ENCODE measurements at regions of chr17 and their contacts with region 1.

Region 1: GRCh38 chr17:59619293-59620063 is at the start of gene CLTC:
- DNase-seq: peak; percentile 89 to 96 (median 95)
- ATAC-seq: peak; percentile 91
- H3K4me3 ChIP-seq: peak within 1 kb of the TSS; percentile 80
- H3K4me3 Mint-ChIP-seq: peak within 1 kb of the TSS; percentile 92 to 100 (median 96)
- H3K27ac ChIP-seq: peak within 1 kb of the TSS; percentile 94
- H3K27ac Mint-ChIP-seq: peak within 1 kb of the TSS; percentile 94 to 100 (median 99)
- H3K4me1 ChIP-seq: peaks cover 12 to 32% of the 10 kb centered on the region in 2 donors
- H3K4me1 Mint-ChIP-seq: peaks cover 23 to 60% (median 51%) of the 10 kb centered on the region in 7 donors
- H3K27me3 ChIP-seq: no peaks in the 10 kb centered on the region
- H3K27me3 Mint-ChIP-seq: peaks cover 0 to 3% (median 0%) of the 10 kb centered on the region in 5 donors
- total RNA-seq, gene CLTC: 67.1 to 174 (median 88.4) TPM

Region 2: GRCh38 chr17:58337600-58338453 is 1281.7 kb before region 1 on chr17:
- CTCF ChIA-PET with region 1: no interaction called
- POLR2A ChIA-PET with region 1: no interaction called
- intact Hi-C with region 1: loop called (anchors 10 kb)
- DNase-seq: peak; percentile 73 to 93 (median 85)
- ATAC-seq: peak; percentile 88
- H3K4me3 ChIP-seq: peak overlapping the region; percentile 98
- H3K4me3 Mint-ChIP-seq: peak overlapping the region; percentile 86 to 100 (median 97)
- H3K27ac ChIP-seq: peak overlapping the region; percentile 98
- H3K27ac Mint-ChIP-seq: peak overlapping the region; percentile 89 to 100 (median 95)
- H3K4me1 ChIP-seq: peaks cover 59 to 77% of the 10 kb centered on the region in 2 donors
- H3K4me1 Mint-ChIP-seq: peaks cover 52 to 90% (median 65%) of the 10 kb centered on the region in 7 donors
- H3K27me3 ChIP-seq: no peaks in the 10 kb centered on the region
- H3K27me3 Mint-ChIP-seq: no peaks in the 10 kb centered on the region

Region 3: GRCh38 chr17:59277031-59277430 is 342.4 kb before region 1 on chr17:
- CTCF ChIA-PET with region 1: no interaction called
- POLR2A ChIA-PET with region 1: no interaction called
- intact Hi-C with region 1: no loop called
- DNase-seq: no peak
- ATAC-seq: peak; percentile 41
- H3K4me3 ChIP-seq: no peak overlapping the region
- H3K4me3 Mint-ChIP-seq: no peak overlapping the region
- H3K27ac ChIP-seq: no peak overlapping the region
- H3K27ac Mint-ChIP-seq: no peak overlapping the region
- H3K4me1 ChIP-seq: no peaks in the 10 kb centered on the region
- H3K4me1 Mint-ChIP-seq: peaks cover 0 to 3% (median 0%) of the 10 kb centered on the region in 7 donors
- H3K27me3 ChIP-seq: no peaks in the 10 kb centered on the region
- H3K27me3 Mint-ChIP-seq: peaks cover 0 to 3% (median 0%) of the 10 kb centered on the region in 5 donors

Region 4: DNA sequence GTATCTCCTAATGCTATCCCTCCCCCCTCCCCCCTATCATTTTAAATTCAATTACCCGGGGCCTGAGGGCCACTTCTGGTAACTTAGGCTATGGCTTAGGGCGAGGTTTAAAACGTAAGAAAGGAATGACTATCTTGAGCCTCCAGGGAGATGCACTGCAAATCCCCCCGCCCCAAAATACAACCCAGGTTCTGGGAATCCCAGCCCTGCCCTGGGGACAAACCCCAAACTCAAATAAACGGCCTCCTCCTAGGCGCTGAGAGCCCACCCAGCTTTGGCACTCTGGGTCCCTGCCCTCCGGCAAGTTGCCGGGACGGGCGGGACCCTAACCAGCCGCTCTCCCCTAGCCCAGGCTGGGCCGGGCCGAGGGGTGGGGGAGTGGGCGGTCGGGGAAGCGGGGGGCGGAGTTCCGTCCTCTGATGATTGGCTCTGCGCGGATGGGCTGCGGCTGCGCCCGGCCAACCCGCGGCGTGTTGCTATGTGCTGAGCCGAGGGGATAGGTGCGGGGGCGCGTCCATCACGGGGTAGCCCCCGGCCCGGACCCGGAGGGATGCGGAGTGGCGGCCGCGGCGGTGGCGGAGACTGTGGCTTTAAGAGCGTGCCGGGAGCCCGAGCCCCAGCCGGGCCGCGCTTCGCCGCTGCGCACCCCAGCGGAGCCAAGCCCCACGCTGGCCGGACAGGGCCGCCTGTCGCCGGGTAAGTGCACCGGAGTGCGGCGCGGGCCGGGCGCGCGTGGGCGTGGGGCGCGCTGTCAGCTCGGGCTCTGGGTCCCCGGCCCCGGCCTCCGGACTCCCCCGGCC is 288.1 kb before region 1 on chr17 and contains the start of gene YPEL2:
- CTCF ChIA-PET with region 1: no interaction called
- POLR2A ChIA-PET with region 1: no interaction called
- intact Hi-C with region 1: loop called (anchors 1 to 5 kb)
- DNase-seq: peak; percentile 77 to 92 (median 89)
- ATAC-seq: peak; percentile 96
- H3K4me3 ChIP-seq: peak within 1 kb of the TSS; percentile 67
- H3K4me3 Mint-ChIP-seq: peak within 1 kb of the TSS; percentile 89 to 96 (median 94)
- H3K27ac ChIP-seq: peak within 1 kb of the TSS; percentile 77
- H3K27ac Mint-ChIP-seq: peak within 1 kb of the TSS; percentile 77 to 98 (median 94)
- H3K4me1 ChIP-seq: peaks cover 30 to 55% of the 10 kb centered on the region in 2 donors
- H3K4me1 Mint-ChIP-seq: peaks cover 53 to 85% (median 79%) of the 10 kb centered on the region in 7 donors
- H3K27me3 ChIP-seq: no peaks in the 10 kb centered on the region
- H3K27me3 Mint-ChIP-seq: peaks cover 0 to 11% (median 0%) of the 10 kb centered on the region in 5 donors
- total RNA-seq, gene YPEL2: 10.6 to 52.0 (median 46.8) TPM

Region 5: DNA sequence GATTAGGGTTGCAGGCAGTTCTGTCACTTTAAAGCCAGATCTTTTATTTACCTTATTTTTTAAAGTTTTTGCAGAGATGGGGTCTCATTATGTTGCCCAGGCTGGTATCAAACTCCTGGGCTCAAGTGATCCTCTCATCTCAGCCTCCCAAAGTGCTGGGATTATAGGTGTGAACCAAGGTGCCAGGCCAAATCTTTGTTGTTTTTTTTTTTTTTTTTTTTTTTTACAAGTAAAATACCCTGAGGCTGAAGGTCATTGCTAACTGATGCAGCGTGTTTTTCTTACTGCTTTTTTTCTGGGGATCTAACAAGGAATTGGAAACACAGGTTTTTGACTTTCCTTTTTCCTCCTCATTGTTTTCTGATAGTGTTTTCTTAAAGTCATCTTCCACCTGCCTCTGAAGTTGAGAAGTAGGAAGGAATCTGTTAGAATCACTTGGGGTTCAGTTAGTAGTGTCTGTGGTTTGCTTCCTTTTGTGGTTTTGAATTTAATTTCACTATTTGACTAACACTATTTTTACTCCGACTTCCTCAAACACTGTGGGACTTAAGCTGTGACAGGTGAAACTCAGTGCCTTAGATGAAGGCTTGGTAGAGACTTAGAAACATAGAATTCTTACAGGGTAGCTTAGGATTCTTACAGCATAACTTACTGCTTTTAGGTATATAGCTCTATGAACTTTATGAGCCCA is 22.5 kb after region 1 on chr17:
- CTCF ChIA-PET with region 1: no interaction called
- POLR2A ChIA-PET with region 1: interaction called, 19 read pairs
- intact Hi-C with region 1: loop called (anchors 1 kb)
- DNase-seq: peak in 6 of 9 donors; percentile 24 to 51 (median 44)
- ATAC-seq: peak; percentile 86
- H3K4me3 ChIP-seq: no peak overlapping the region
- H3K4me3 Mint-ChIP-seq: peak overlapping the region; percentile 16 to 81 (median 76)
- H3K27ac ChIP-seq: no peak overlapping the region
- H3K27ac Mint-ChIP-seq: peak overlapping the region; percentile 7 to 89 (median 64)
- H3K4me1 ChIP-seq: peaks cover 17 to 20% of the 10 kb centered on the region in 2 donors
- H3K4me1 Mint-ChIP-seq: peaks cover 34 to 70% (median 65%) of the 10 kb centered on the region in 7 donors
- H3K27me3 ChIP-seq: no peaks in the 10 kb centered on the region
- H3K27me3 Mint-ChIP-seq: no peaks in the 10 kb centered on the region

Region 6: DNA sequence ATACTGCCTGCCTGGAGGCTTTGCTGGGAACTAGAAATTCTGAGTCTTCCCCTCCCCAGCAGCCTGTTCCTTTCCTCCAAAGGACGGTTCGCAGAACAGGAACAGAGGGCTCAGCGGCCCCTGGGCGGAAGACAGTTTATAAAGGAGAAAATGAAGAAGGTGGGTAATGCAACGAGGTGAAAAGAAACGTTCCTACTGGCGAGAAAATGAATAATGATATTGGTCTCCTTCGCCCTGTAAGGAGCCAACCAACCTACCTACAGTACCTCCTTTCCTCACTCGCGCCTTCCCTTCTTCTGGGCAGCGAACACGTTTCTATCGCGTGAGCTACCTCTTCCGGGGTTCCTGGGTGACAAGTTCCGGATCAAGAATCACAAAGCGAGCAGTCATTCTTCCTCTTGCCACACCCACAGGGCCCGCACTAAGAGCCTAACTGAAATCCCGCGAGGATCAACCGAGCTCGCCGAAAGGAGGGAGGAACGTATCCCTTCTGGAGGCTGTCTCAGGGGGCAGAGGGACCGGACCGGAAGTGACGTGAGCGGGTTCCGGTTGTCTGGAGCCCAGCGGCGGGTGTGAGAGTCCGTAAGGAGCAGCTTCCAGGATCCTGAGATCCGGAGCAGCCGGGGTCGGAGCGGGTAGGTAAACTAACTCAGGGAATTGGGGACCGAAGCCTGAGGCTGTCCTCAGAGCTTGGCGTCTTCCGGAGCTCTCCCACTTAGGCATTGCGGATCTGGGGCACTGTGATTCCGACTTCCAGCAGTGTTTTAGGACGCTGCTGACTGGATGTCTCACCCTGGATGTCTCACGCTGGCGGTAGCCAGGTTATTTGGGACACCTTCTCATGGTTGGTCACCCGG is 87.9 kb after region 1 on chr17 and contains the starts of genes PTRH2 and VMP1:
- CTCF ChIA-PET with region 1: interaction called, 5 read pairs
- POLR2A ChIA-PET with region 1: interaction called, 21 read pairs
- intact Hi-C with region 1: loop called (anchors 1 kb)
- DNase-seq: peak; percentile 72 to 94 (median 83)
- ATAC-seq: peak; percentile 96
- H3K4me3 ChIP-seq: peak within 1 kb of the TSS; percentile 90
- H3K4me3 Mint-ChIP-seq: peak within 1 kb of the TSS; percentile 97 to 100 (median 99)
- H3K27ac ChIP-seq: peak within 1 kb of the TSS; percentile 90
- H3K27ac Mint-ChIP-seq: peak within 1 kb of the TSS; percentile 96 to 100 (median 99)
- H3K4me1 ChIP-seq: peaks cover 26 to 28% of the 10 kb centered on the region in 2 donors
- H3K4me1 Mint-ChIP-seq: peaks cover 39 to 86% (median 68%) of the 10 kb centered on the region in 7 donors
- H3K27me3 ChIP-seq: no peaks in the 10 kb centered on the region
- H3K27me3 Mint-ChIP-seq: no peaks in the 10 kb centered on the region
- total RNA-seq, gene PTRH2: 6.1 to 24.1 (median 15.0) TPM
- total RNA-seq, gene VMP1: 70.3 to 370 (median 82.5) TPM

Region 7: GRCh38 chr17:59892924-59893676 is 273.6 kb after region 1 on chr17 and contains the starts of genes RPS6KB1 and TUBD1:
- CTCF ChIA-PET with region 1: no interaction called
- POLR2A ChIA-PET with region 1: interaction called, 3 read pairs
- intact Hi-C with region 1: loop called (anchors 1 kb)
- DNase-seq: peak; percentile 87 to 99 (median 98)
- ATAC-seq: peak; percentile 96
- H3K4me3 ChIP-seq: peak within 1 kb of the TSS; percentile 74
- H3K4me3 Mint-ChIP-seq: peak within 1 kb of the TSS; percentile 97 to 100 (median 99)
- H3K27ac ChIP-seq: peak within 1 kb of the TSS; percentile 93
- H3K27ac Mint-ChIP-seq: peak within 1 kb of the TSS; percentile 98 to 100 (median 100)
- H3K4me1 ChIP-seq: peaks cover 13 to 23% of the 10 kb centered on the region in 2 donors
- H3K4me1 Mint-ChIP-seq: peaks cover 43 to 83% (median 67%) of the 10 kb centered on the region in 7 donors
- H3K27me3 ChIP-seq: no peaks in the 10 kb centered on the region
- H3K27me3 Mint-ChIP-seq: peaks cover 0 to 4% (median 0%) of the 10 kb centered on the region in 5 donors
- total RNA-seq, gene RPS6KB1: 62.0 to 107 (median 71.5) TPM
- total RNA-seq, gene TUBD1: 8.2 to 42.1 (median 14.3) TPM

Region 8: GRCh38 chr17:60599620-60600489 is 980.4 kb after region 1 on chr17 and contains the start of gene PPM1D:
- CTCF ChIA-PET with region 1: no interaction called
- POLR2A ChIA-PET with region 1: no interaction called
- intact Hi-C with region 1: loop called in 1 of 2 experiments (anchors 2 kb)
- DNase-seq: peak; percentile 92 to 97 (median 95)
- ATAC-seq: peak; percentile 97
- H3K4me3 ChIP-seq: peak within 1 kb of the TSS; percentile 70
- H3K4me3 Mint-ChIP-seq: peak within 1 kb of the TSS; percentile 93 to 99 (median 97)
- H3K27ac ChIP-seq: peak within 1 kb of the TSS; percentile 88
- H3K27ac Mint-ChIP-seq: peak within 1 kb of the TSS; percentile 91 to 99 (median 95)
- H3K4me1 ChIP-seq: peaks cover 0 to 13% of the 10 kb centered on the region in 2 donors
- H3K4me1 Mint-ChIP-seq: peaks cover 33 to 55% (median 43%) of the 10 kb centered on the region in 7 donors
- H3K27me3 ChIP-seq: no peaks in the 10 kb centered on the region
- H3K27me3 Mint-ChIP-seq: no peaks in the 10 kb centered on the region
- total RNA-seq, gene PPM1D: 13.5 to 18.8 (median 17.7) TPM